Activated naive CD4-positive, alpha-beta T cell treated with anti-CD3 and anti-CD28 coated beads for 36 hours (primary cell): ENCODE measurements at regions of chr16 and their contacts with region 1.

Region 1: GRCh38 chr16:30813821-30814189 is 26.8 kb upstream of the ZNF629 start:
- DNase-seq: no peak
- H3K4me3 Mint-ChIP-seq: peak overlapping the region; percentile 76
- H3K27ac Mint-ChIP-seq: peak overlapping the region; percentile 38
- H3K4me1 Mint-ChIP-seq: peaks cover 14% of the 10 kb centered on the region
- H3K27me3 Mint-ChIP-seq: no peaks in the 10 kb centered on the region

Region 2: GRCh38 chr16:30541502-30542329 is 272.1 kb before region 1 on chr16:
- CTCF ChIA-PET with region 1: no interaction called
- intact Hi-C with region 1: no loop called
- DNase-seq: no peak
- H3K4me3 Mint-ChIP-seq: no peak overlapping the region
- H3K27ac Mint-ChIP-seq: no peak overlapping the region
- H3K4me1 Mint-ChIP-seq: peaks cover 20% of the 10 kb centered on the region
- H3K27me3 Mint-ChIP-seq: no peaks in the 10 kb centered on the region

Region 3: GRCh38 chr16:30747799-30748634 is 65.8 kb before region 1 on chr16 and contains the start of gene PHKG2:
- CTCF ChIA-PET with region 1: interaction called, 5 read pairs
- intact Hi-C with region 1: loop called (anchors 1 kb)
- DNase-seq: peak; percentile 99
- H3K4me3 Mint-ChIP-seq: peak within 1 kb of the TSS; percentile 89
- H3K27ac Mint-ChIP-seq: peak within 1 kb of the TSS; percentile 86
- H3K4me1 Mint-ChIP-seq: peaks cover 19% of the 10 kb centered on the region
- H3K27me3 Mint-ChIP-seq: no peaks in the 10 kb centered on the region
- total RNA-seq, gene PHKG2: 23.3 to 26.4 TPM

Region 4: DNA sequence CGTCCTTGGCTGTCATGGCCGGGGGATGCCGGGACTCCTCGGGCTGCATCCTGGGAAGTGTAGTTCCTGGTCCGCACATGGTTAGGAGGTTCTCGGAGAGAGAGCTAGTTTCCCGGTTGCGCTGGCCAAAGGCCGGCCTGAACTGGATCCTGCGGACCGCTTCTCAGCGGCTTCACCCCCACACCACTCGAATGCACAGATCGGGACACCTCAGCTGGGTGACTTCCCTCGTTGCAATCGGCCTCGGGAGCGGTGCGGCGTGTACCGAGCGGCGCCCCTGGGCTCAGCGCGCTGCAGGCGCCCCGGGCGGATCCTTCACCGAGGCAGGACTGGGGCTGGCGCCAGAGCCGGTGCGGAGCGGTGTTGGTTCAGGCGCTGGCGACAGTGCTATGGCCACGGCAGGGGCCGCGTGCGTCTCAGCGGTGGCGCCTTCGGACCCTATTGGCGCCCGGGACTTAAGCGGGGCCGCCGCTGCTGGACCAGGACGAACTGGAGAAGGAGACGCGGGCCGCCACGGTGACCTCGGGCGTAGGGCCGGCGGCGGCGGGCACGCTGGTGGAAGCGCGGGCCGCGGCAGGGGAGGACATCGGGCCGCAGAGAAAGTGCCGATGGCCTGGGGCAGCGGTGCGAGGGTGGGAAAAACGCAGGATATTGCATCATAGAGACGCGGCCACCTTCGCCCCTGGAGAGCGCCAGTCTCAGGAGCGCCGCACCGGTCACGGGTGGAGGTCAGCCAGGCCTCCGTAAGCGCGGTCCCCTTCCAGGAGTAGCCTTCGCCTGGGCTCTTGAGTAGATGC is 38.2 kb before region 1 on chr16:
- CTCF ChIA-PET with region 1: interaction called, 4 read pairs
- intact Hi-C with region 1: loop called (anchors 1 kb)
- DNase-seq: peak; percentile 78
- H3K4me3 Mint-ChIP-seq: peak overlapping the region; percentile 95
- H3K27ac Mint-ChIP-seq: peak overlapping the region; percentile 93
- H3K4me1 Mint-ChIP-seq: peaks cover 17% of the 10 kb centered on the region
- H3K27me3 Mint-ChIP-seq: no peaks in the 10 kb centered on the region

Region 5: GRCh38 chr16:30844671-30845449 is 31.1 kb after region 1 on chr16:
- CTCF ChIA-PET with region 1: interaction called, 13 read pairs
- intact Hi-C with region 1: no loop called
- DNase-seq: peak; percentile 93
- H3K4me3 Mint-ChIP-seq: no peak overlapping the region
- H3K27ac Mint-ChIP-seq: no peak overlapping the region
- H3K4me1 Mint-ChIP-seq: peaks cover 8% of the 10 kb centered on the region
- H3K27me3 Mint-ChIP-seq: no peaks in the 10 kb centered on the region

Region 6: DNA sequence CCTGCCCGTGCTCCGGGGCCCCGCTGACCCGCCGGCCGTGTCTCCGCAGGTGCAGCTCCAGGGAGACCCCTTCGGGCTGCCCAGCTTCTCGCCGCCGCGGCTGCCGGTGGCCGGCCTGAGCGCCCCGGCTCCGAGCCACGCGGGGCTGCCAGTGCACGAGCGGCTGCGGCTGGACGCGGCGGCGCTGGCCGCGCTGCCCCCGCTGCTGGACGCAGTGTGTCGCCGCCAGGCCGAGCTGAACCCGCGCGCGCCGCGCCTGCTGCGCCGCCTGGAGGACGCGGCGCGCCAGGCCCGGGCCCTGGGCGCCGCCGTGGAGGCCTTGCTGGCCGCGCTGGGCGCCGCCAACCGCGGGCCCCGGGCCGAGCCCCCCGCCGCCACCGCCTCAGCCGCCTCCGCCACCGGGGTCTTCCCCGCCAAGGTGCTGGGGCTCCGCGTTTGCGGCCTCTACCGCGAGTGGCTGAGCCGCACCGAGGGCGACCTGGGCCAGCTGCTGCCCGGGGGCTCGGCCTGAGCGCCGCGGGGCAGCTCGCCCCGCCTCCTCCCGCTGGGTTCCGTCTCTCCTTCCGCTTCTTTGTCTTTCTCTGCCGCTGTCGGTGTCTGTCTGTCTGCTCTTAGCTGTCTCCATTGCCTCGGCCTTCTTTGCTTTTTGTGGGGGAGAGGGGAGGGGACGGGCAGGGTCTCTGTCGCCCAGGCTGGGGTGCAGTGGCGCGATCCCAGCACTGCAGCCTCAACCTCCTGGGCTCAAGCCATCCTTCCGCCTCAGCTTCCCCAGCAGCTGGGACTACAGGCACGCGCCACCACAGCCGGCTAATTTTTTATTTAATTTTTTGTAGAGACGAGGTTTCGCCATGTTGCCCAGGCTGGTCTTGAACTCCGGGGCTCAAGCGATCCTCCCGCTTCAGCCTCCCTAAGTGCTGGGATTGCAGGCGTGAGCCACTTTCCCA is 88.5 kb after region 1 on chr16:
- CTCF ChIA-PET with region 1: interaction called, 13 read pairs
- intact Hi-C with region 1: no loop called
- DNase-seq: peak; percentile 54
- H3K4me3 Mint-ChIP-seq: peak overlapping the region; percentile 98
- H3K27ac Mint-ChIP-seq: peak overlapping the region; percentile 98
- H3K4me1 Mint-ChIP-seq: peaks cover 29% of the 10 kb centered on the region
- H3K27me3 Mint-ChIP-seq: no peaks in the 10 kb centered on the region